Natural killer cell (primary cell): ENCODE measurements at regions of chr13 and their contacts with region 1.

Region 1: GRCh38 chr13:32674503-32674902 is 88.3 kb downstream of the PDS5B start:
- DNase-seq: no peak
- ATAC-seq: no peak
- H3K4me3 ChIP-seq: no peak overlapping the region
- H3K4me3 Mint-ChIP-seq: no peak overlapping the region
- H3K27ac ChIP-seq: no peak overlapping the region
- H3K27ac Mint-ChIP-seq: no peak overlapping the region
- H3K4me1 ChIP-seq: no peaks in the 10 kb centered on the region
- H3K4me1 Mint-ChIP-seq: no peaks in the 10 kb centered on the region
- H3K27me3 ChIP-seq: no peaks in the 10 kb centered on the region
- H3K27me3 Mint-ChIP-seq: no peaks in the 10 kb centered on the region
- CTCF ChIP-seq: no peak

Region 2: DNA sequence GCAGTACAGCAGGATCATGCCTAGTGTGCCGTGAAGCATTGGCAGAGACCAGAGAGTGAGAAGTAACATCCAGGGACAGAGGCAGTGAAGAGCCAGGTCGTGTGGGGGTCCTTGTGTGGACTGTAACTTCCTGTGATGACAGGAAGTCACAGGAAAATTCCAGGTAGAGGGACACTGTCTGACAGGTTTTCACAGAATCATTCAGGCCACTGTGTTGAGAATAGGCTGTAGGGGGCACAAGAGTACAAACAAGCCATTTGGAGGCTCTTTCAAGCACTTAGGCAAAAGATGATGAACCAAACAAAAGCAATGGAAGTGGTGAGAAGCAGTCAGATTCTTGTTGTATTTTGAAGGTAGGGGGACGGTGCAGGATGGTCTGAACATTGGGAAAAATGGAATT is 293.0 kb before region 1 on chr13:
- intact Hi-C with region 1: no loop called
- DNase-seq: peak in 1 of 2 donors; percentile 63
- ATAC-seq: peak in 2 of 3 donors; percentile 72 to 73
- H3K4me3 ChIP-seq: no peak overlapping the region
- H3K4me3 Mint-ChIP-seq: no peak overlapping the region
- H3K27ac ChIP-seq: no peak overlapping the region
- H3K27ac Mint-ChIP-seq: no peak overlapping the region
- H3K4me1 ChIP-seq: no peaks in the 10 kb centered on the region
- H3K4me1 Mint-ChIP-seq: no peaks in the 10 kb centered on the region
- H3K27me3 ChIP-seq: no peaks in the 10 kb centered on the region
- H3K27me3 Mint-ChIP-seq: no peaks in the 10 kb centered on the region
- CTCF ChIP-seq: peak; percentile 53

Region 3: GRCh38 chr13:32548837-32549236 is 125.7 kb before region 1 on chr13:
- intact Hi-C with region 1: no loop called
- DNase-seq: no peak
- ATAC-seq: no peak
- H3K4me3 ChIP-seq: no peak overlapping the region
- H3K4me3 Mint-ChIP-seq: no peak overlapping the region
- H3K27ac ChIP-seq: no peak overlapping the region
- H3K27ac Mint-ChIP-seq: no peak overlapping the region
- H3K4me1 ChIP-seq: no peaks in the 10 kb centered on the region
- H3K4me1 Mint-ChIP-seq: no peaks in the 10 kb centered on the region
- H3K27me3 ChIP-seq: no peaks in the 10 kb centered on the region
- H3K27me3 Mint-ChIP-seq: peaks cover 7 to 14% of the 10 kb centered on the region in 2 donors
- CTCF ChIP-seq: no peak

Region 4: DNA sequence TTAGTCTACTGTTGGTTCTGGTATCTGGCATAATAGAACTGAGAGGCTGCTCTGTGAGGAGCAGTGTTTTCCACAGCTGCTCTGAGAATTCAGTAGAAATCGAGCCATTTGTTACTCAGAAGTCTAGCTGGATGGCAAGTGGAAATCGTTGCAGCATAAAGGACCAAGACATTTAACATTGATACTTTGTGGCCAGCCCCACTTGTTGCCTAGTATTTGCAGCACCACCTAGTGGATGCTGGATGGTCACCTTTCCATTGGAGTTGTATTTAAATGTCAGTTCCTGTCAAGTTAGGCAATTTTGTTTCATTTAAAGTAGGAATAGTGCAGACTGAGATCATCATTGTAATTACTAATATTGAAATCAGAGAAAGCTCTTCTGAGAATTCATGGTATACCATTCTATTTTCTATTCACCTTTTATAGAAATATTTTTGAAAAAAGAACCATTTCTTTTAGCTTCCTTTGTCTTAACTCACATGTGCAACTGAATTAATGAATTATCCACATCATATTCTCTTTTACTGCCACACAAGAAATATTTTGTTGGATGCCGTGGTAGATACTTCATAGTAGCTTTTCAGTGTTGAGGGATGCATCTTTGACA is 23.7 kb before region 1 on chr13:
- intact Hi-C with region 1: loop called (anchors 2 kb)
- DNase-seq: peak in 1 of 2 donors; percentile 79
- ATAC-seq: peak; percentile 77 to 89 (median 86)
- H3K4me3 ChIP-seq: no peak overlapping the region
- H3K4me3 Mint-ChIP-seq: no peak overlapping the region
- H3K27ac ChIP-seq: no peak overlapping the region
- H3K27ac Mint-ChIP-seq: peak overlapping the region; percentile 37 to 39
- H3K4me1 ChIP-seq: peaks cover 3% of the 10 kb centered on the region
- H3K4me1 Mint-ChIP-seq: peaks cover 28 to 34% of the 10 kb centered on the region in 2 donors
- H3K27me3 ChIP-seq: no peaks in the 10 kb centered on the region
- H3K27me3 Mint-ChIP-seq: no peaks in the 10 kb centered on the region
- CTCF ChIP-seq: peak; percentile 81